ENCODE measurements at regions of chr1 and their contacts with region 1.

Region 1: DNA sequence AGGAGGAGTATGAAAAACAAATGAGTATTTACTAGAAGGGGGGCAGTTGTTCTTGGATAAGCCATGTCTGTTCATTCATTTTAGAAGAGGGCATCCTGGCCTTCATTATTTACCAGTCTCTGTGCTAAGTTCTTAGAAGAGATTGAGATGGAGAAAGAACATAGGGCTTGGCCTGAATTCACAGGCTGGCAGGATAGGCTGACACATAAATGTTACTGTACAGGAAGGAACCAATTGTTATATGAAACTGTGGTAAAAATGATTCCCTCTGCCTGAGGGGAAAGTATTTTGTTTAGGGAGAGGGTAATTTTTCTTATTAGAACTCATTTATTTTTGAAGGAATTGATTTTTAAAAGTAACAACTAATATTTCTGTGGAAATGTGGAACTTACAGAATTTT is 99.5 kb downstream of the MAN1A2 start:
- DNase-seq: peak; percentile 86
- H3K4me3 ChIP-seq: peak overlapping the region in 2 of 3 experiments; percentile 52 to 53
- H3K27ac ChIP-seq: peak overlapping the region; percentile 89
- H3K4me1 ChIP-seq: peaks cover 28% of the 10 kb centered on the region
- H3K27me3 ChIP-seq: no peaks in the 10 kb centered on the region
- CTCF ChIP-seq: no peak
- POLR2A ChIP-seq: no peak

Region 2: GRCh38 chr1:117447661-117448060 is 19.1 kb before region 1 on chr1:
- CTCF ChIA-PET with region 1: no interaction called
- POLR2A ChIA-PET with region 1: no interaction called
- dilution Hi-C with region 1: no loop called
- intact Hi-C with region 1: loop called (anchors 2 kb)
- DNase-seq: no peak
- H3K4me3 ChIP-seq: no peak overlapping the region
- H3K27ac ChIP-seq: no peak overlapping the region
- H3K4me1 ChIP-seq: no peaks in the 10 kb centered on the region
- H3K27me3 ChIP-seq: no peaks in the 10 kb centered on the region
- CTCF ChIP-seq: no peak
- POLR2A ChIP-seq: no peak

Region 3: GRCh38 chr1:117512743-117513321 is 46.1 kb after region 1 on chr1:
- CTCF ChIA-PET with region 1: no interaction called
- POLR2A ChIA-PET with region 1: no interaction called
- dilution Hi-C with region 1: no loop called
- intact Hi-C with region 1: no loop called
- DNase-seq: peak; percentile 41
- H3K4me3 ChIP-seq: no peak overlapping the region
- H3K27ac ChIP-seq: no peak overlapping the region
- H3K4me1 ChIP-seq: no peaks in the 10 kb centered on the region
- H3K27me3 ChIP-seq: no peaks in the 10 kb centered on the region
- CTCF ChIP-seq: peak; percentile 20 to 32
- POLR2A ChIP-seq: no peak

Measured in endothelial cell of umbilical vein (primary cell).